ENCODE measurements at regions of chr4 and their contacts with region 1.

Region 1: GRCh38 chr4:39591290-39591689 is 47.4 kb downstream of the SMIM14 start:
- DNase-seq: peak; percentile 49
- H3K4me3 ChIP-seq: no peak overlapping the region
- H3K27ac ChIP-seq: no peak overlapping the region
- H3K4me1 ChIP-seq: no peaks in the 10 kb centered on the region
- CTCF ChIP-seq: peak; percentile 65

Region 2: GRCh38 chr4:39480902-39481695 is 110.2 kb before region 1 on chr4:
- CTCF ChIA-PET with region 1: no interaction called
- POLR2A ChIA-PET with region 1: no interaction called
- intact Hi-C with region 1: loop called (anchors 5 kb)
- DNase-seq: no peak
- H3K4me3 ChIP-seq: no peak overlapping the region
- H3K27ac ChIP-seq: no peak overlapping the region
- H3K4me1 ChIP-seq: no peaks in the 10 kb centered on the region
- CTCF ChIP-seq: no peak

Measured in OCI-LY7 (cell line).